Endothelial cell of umbilical vein (primary cell): ENCODE measurements at regions of chr16 and their contacts with region 1.

Region 1: DNA sequence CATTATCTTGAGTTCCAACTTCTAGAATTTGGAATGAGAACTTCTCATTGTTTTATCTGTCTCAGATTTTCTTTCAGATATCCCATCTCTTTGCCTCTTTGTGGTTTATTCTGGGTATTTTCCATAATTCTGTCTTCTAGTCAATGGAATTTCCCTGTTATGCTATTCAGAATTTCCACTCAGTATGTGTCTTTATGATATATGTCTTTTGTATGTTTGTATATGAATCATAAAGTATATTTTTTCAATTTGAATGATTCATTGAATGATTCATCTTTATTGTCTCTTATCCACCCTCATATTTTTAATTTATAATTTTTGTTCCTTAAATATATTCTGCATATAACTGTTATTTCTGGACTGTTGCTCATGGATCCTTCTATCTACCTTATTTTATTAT is 729.7 kb upstream of the GOT2 start:
- DNase-seq: peak; percentile 54
- H3K4me3 ChIP-seq: no peak overlapping the region
- H3K27ac ChIP-seq: peak overlapping the region; percentile 5
- H3K4me1 ChIP-seq: peaks cover 5% of the 10 kb centered on the region
- H3K27me3 ChIP-seq: no peaks in the 10 kb centered on the region
- CTCF ChIP-seq: no peak
- POLR2A ChIP-seq: no peak

Region 2: DNA sequence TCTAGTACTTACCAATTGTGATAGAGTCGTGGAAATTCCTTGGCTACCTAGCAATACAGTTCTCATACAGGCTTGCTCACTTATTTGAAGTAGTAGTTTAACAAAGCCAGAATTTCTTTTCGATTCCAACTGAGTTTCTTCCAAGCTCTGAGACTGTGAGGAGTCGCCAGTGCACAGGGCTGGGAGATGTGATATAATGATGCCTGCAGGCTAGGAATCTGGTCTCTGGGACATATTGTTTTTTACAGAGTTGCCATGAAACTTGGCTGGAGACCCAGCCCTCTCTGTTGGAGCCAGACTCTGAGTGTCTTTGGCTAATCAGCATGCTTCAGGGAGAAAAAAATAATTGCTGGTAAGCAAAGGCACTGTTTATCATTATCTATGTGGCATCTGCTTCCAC is 30.9 kb before region 1 on chr16:
- CTCF ChIA-PET with region 1: no interaction called
- POLR2A ChIA-PET with region 1: no interaction called
- dilution Hi-C with region 1: no loop called
- intact Hi-C with region 1: no loop called
- DNase-seq: no peak
- H3K4me3 ChIP-seq: no peak overlapping the region
- H3K27ac ChIP-seq: no peak overlapping the region
- H3K4me1 ChIP-seq: no peaks in the 10 kb centered on the region
- H3K27me3 ChIP-seq: no peaks in the 10 kb centered on the region
- CTCF ChIP-seq: no peak
- POLR2A ChIP-seq: no peak

Region 3: DNA sequence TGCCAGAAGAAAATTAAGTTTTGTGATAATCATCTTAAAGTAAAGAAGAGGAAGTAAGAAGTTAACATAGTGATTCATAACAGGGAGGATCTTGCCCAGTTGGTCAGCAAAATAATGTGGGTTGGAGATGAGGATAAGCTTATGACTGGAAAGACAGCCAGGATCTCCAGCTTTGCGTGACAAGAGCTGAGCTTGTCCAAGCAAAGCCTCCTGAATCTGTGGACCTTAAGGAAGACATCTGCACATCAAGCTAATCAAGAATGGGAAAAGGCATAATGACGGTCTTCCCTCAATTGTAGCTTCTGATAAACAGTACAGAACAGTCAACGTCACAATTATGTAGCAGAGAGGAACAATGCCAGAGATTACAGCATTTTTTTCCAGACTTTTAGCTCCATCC is 15.1 kb after region 1 on chr16:
- CTCF ChIA-PET with region 1: interaction called, 7 read pairs
- POLR2A ChIA-PET with region 1: no interaction called
- dilution Hi-C with region 1: no loop called
- intact Hi-C with region 1: loop called (anchors 2 kb)
- DNase-seq: peak; percentile 88
- H3K4me3 ChIP-seq: no peak overlapping the region
- H3K27ac ChIP-seq: peak overlapping the region; percentile 45
- H3K4me1 ChIP-seq: peaks cover 11% of the 10 kb centered on the region
- H3K27me3 ChIP-seq: no peaks in the 10 kb centered on the region
- CTCF ChIP-seq: no peak
- POLR2A ChIP-seq: no peak